Colonic mucosa (tissue), 4 donors: ENCODE measurements at regions of chr18 and their contacts with region 1.

Region 1: GRCh38 chr18:46281185-46282176 is 177.3 kb downstream of the HAUS1 start:
- DNase-seq: peak; percentile 65
- H3K4me3 ChIP-seq: no peak overlapping the region
- H3K27ac ChIP-seq: no peak overlapping the region
- H3K4me1 ChIP-seq: no peaks in the 10 kb centered on the region
- H3K27me3 ChIP-seq: no peaks in the 10 kb centered on the region
- CTCF ChIP-seq: peak; percentile 93

Region 2: GRCh38 chr18:46173393-46174341 is 107.8 kb before region 1 on chr18:
- intact Hi-C with region 1: loop called (anchors 10 kb)
- DNase-seq: peak; percentile 94
- H3K4me3 ChIP-seq: peak overlapping the region; percentile 100
- H3K27ac ChIP-seq: peak overlapping the region; percentile 85
- H3K4me1 ChIP-seq: no peaks in the 10 kb centered on the region
- H3K27me3 ChIP-seq: no peaks in the 10 kb centered on the region
- CTCF ChIP-seq: peak; percentile 79

Region 3: GRCh38 chr18:46481048-46481846 is 199.8 kb after region 1 on chr18:
- intact Hi-C with region 1: loop called (anchors 2 kb)
- DNase-seq: peak; percentile 45
- H3K4me3 ChIP-seq: no peak overlapping the region
- H3K27ac ChIP-seq: no peak overlapping the region
- H3K4me1 ChIP-seq: no peaks in the 10 kb centered on the region
- H3K27me3 ChIP-seq: no peaks in the 10 kb centered on the region
- CTCF ChIP-seq: peak; percentile 74

Region 4: GRCh38 chr18:46657115-46657955 is 375.9 kb after region 1 on chr18 and contains the start of gene LOXHD1:
- intact Hi-C with region 1: loop called (anchors 5 kb)
- DNase-seq: no peak
- H3K4me3 ChIP-seq: no peak within 1 kb of the TSS
- H3K27ac ChIP-seq: no peak within 1 kb of the TSS
- H3K4me1 ChIP-seq: no peaks in the 10 kb centered on the region
- H3K27me3 ChIP-seq: no peaks in the 10 kb centered on the region
- CTCF ChIP-seq: no peak
- total RNA-seq, gene LOXHD1: not detected